Activated CD4-positive, alpha-beta T cell treated with anti-CD3 and anti-CD28 coated beads for 36 hours (primary cell): ENCODE measurements at regions of chr2 and their contacts with region 1.

Region 1: GRCh38 chr2:101419096-101419663 is 31.9 kb upstream of the CREG2 start:
- DNase-seq: peak; percentile 75
- ATAC-seq: peak; percentile 84
- H3K4me3 Mint-ChIP-seq: no peak overlapping the region
- H3K27ac Mint-ChIP-seq: no peak overlapping the region
- H3K4me1 Mint-ChIP-seq: no peaks in the 10 kb centered on the region
- H3K27me3 Mint-ChIP-seq: no peaks in the 10 kb centered on the region

Region 2: GRCh38 chr2:100673691-100674485 is 745.3 kb before region 1 on chr2:
- CTCF ChIA-PET with region 1: no interaction called
- POLR2A ChIA-PET with region 1: no interaction called
- intact Hi-C with region 1: no loop called
- DNase-seq: no peak
- ATAC-seq: no peak
- H3K4me3 Mint-ChIP-seq: no peak overlapping the region
- H3K27ac Mint-ChIP-seq: no peak overlapping the region
- H3K4me1 Mint-ChIP-seq: no peaks in the 10 kb centered on the region
- H3K27me3 Mint-ChIP-seq: no peaks in the 10 kb centered on the region

Region 3: DNA sequence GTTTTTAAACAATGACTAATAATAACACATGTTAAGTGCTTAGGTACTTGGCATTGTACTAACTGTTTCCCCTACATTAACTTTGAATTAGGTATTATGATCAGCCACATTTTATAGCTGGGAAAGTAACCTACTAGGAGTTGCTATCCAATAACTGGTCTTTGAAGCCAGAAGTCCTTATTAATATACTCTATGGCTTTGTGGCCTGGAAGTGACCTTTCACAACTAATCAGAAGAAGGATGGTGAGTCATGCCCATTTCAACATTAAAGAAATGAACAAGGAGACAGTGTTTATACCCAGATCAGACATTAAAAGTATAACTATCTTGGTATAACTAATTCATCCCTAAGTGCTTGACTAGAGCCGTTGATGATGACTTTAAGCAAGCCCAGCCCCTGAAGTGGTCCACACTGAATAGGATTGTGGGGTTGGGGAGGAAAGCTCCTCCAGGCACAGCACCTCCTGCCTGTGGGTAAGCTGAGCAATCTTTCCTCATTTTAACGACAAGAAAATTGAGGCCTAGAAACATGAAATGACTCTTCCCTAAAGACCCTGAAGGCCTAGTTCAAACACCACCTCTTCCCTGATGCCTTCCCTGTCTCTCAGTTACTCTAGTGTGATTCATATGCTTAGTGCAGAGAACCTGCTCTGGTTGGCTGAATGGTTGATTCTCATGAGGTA is 127.3 kb after region 1 on chr2:
- CTCF ChIA-PET with region 1: no interaction called
- POLR2A ChIA-PET with region 1: no interaction called
- intact Hi-C with region 1: no loop called
- DNase-seq: no peak
- ATAC-seq: no peak
- H3K4me3 Mint-ChIP-seq: no peak overlapping the region
- H3K27ac Mint-ChIP-seq: no peak overlapping the region
- H3K4me1 Mint-ChIP-seq: peaks cover 9% of the 10 kb centered on the region
- H3K27me3 Mint-ChIP-seq: no peaks in the 10 kb centered on the region

Region 4: DNA sequence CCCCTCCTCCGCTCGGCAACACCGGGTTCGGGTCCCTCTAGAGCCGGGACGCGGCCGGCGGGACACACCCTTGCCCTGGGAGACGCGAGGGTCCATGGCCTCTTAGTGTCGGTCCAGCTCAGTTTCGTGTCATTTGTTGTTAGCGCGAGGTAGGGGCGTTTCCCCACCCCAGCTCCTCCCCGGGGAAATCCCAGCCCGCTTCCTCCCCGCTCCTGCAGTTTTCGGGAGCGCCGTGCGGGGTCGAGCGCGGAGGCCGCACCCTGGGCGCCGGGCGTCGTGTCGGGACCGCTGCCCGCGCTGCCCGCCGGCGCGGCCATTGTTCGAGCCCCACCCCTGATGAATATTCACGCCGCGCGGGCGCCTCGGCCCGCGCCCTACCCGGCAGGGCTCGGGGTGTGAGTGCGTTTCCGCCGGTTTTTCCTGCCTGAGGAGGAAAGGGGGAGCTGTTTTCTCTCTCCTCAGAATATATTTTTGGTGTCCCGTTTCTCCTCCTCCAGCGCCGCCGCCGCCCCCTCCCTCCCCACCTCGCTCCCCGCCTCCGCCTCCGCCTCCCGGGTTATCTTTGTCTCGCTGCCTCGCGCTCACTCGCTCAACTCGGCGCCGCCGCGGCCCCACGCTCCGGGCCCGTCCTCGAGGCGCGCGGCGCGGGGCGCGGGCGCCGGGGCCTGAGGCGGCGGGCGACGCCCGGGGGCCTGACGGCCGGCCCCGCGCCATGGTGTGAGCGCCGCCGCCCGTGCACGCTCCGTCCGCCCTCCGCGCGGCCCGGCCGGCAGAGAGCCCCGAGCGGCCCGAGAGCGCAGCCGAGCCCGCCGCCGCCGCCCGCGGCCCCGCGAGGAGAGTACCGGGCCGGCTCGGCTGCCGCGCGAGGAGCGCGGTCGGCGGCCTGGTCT is 278.2 kb after region 1 on chr2 and contains the start of gene MAP4K4:
- CTCF ChIA-PET with region 1: no interaction called
- POLR2A ChIA-PET with region 1: no interaction called
- intact Hi-C with region 1: loop called in 1 of 2 experiments (anchors 5 kb)
- DNase-seq: peak; percentile 85
- ATAC-seq: peak; percentile 52
- H3K4me3 Mint-ChIP-seq: no peak within 1 kb of the TSS
- H3K27ac Mint-ChIP-seq: peak within 1 kb of the TSS; percentile 68
- H3K4me1 Mint-ChIP-seq: peaks cover 30% of the 10 kb centered on the region
- H3K27me3 Mint-ChIP-seq: no peaks in the 10 kb centered on the region
- total RNA-seq, gene MAP4K4: 62.3 to 70.2 TPM

Region 5: DNA sequence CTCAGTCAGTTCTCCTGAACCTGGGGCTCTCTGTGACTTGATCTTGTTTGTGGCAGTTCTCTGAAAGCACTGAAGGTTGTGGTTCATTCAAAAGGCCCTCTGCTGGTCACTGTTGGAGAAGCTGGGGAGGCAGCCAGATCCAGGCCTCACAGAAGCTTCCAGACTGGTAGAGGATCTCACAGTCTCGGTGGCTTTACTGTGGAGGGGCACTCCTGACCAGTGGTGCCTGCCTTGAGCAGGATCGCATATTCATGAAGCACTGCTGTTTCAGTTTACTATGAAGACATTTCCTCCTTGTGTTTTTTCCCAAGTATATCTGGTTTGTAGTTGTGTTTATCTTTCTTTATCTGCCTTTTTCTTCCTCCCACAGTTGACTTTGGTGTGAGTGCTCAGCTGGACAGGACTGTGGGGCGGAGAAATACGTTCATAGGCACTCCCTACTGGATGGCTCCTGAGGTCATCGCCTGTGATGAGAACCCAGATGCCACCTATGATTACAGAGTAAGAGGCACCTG is 412.2 kb after region 1 on chr2:
- CTCF ChIA-PET with region 1: interaction called, 27 read pairs
- POLR2A ChIA-PET with region 1: no interaction called
- intact Hi-C with region 1: loop called (anchors 1 kb)
- DNase-seq: peak; percentile 79
- ATAC-seq: peak; percentile 56
- H3K4me3 Mint-ChIP-seq: no peak overlapping the region
- H3K27ac Mint-ChIP-seq: peak overlapping the region; percentile 78
- H3K4me1 Mint-ChIP-seq: peaks cover 56% of the 10 kb centered on the region
- H3K27me3 Mint-ChIP-seq: no peaks in the 10 kb centered on the region

Region 6: GRCh38 chr2:101873543-101873942 is 454.4 kb after region 1 on chr2:
- CTCF ChIA-PET with region 1: interaction called, 6 read pairs
- POLR2A ChIA-PET with region 1: no interaction called
- intact Hi-C with region 1: loop called in 1 of 2 experiments (anchors 2 kb)
- DNase-seq: no peak
- ATAC-seq: peak; percentile 49
- H3K4me3 Mint-ChIP-seq: no peak overlapping the region
- H3K27ac Mint-ChIP-seq: peak overlapping the region; percentile 22
- H3K4me1 Mint-ChIP-seq: peaks cover 7% of the 10 kb centered on the region
- H3K27me3 Mint-ChIP-seq: no peaks in the 10 kb centered on the region